ENCODE measurements at regions of chr1 and their contacts with region 1.

Region 1: DNA sequence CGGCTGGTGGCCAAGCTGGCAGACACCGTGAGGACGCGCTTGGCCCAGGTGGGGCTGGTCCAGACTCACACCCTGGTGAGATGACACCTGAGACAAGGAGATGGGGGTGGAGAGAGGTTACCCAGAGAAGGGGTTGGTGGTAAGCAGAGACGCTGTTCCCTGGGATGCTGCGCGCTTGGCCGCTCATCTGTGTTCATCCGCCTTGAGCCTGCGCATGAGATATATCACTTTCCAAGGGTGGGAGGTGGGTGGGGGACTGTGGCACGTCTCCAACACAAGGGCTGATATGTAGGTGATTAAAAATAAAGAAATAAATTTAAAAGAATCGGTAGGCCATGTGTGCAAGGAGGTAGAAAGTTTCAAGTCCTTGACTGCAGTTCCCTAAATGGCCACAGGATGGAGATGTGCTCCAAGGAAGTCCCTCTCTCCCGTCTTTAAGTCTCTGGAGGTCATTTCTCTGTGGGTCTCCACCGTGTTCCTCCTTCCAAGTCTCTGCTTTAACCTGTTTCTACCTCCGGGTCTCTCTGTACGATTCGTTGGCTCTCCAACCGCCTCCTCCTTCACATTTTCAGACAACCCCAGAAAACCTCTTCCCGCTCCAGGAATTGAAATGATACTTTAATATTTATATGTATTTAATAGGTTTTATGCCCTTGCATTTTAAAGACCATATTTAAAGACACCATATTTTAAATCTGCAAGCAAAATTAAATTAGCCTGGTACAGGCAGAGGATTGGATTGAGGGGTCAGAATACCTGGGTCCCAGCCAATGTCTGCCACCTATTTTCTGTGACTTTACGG is 4.5 kb downstream of the TTC24 start:
- DNase-seq: peak in 8 of 9 donors; percentile 49 to 76 (median 69)
- ATAC-seq: peak; percentile 81
- H3K4me3 ChIP-seq: no peak overlapping the region
- H3K4me3 Mint-ChIP-seq: peak overlapping the region in 8 of 10 donors; percentile 9 to 77 (median 54)
- H3K27ac ChIP-seq: peak overlapping the region; percentile 3
- H3K27ac Mint-ChIP-seq: peak overlapping the region in 8 of 9 donors; percentile 26 to 88 (median 72)
- H3K4me1 ChIP-seq: peaks cover 15 to 25% of the 10 kb centered on the region in 2 donors
- H3K4me1 Mint-ChIP-seq: peaks cover 6 to 40% (median 29%) of the 10 kb centered on the region in 7 donors
- H3K27me3 ChIP-seq: no peaks in the 10 kb centered on the region
- H3K27me3 Mint-ChIP-seq: no peaks in the 10 kb centered on the region

Region 2: GRCh38 chr1:156549385-156549784 is 34.6 kb before region 1 on chr1:
- CTCF ChIA-PET with region 1: no interaction called
- POLR2A ChIA-PET with region 1: no interaction called
- intact Hi-C with region 1: no loop called
- DNase-seq: no peak
- ATAC-seq: no peak
- H3K4me3 ChIP-seq: no peak overlapping the region
- H3K4me3 Mint-ChIP-seq: no peak overlapping the region
- H3K27ac ChIP-seq: no peak overlapping the region
- H3K27ac Mint-ChIP-seq: no peak overlapping the region
- H3K4me1 ChIP-seq: no peaks in the 10 kb centered on the region
- H3K4me1 Mint-ChIP-seq: peaks cover 0 to 5% (median 4%) of the 10 kb centered on the region in 7 donors
- H3K27me3 ChIP-seq: no peaks in the 10 kb centered on the region
- H3K27me3 Mint-ChIP-seq: no peaks in the 10 kb centered on the region

Region 3: DNA sequence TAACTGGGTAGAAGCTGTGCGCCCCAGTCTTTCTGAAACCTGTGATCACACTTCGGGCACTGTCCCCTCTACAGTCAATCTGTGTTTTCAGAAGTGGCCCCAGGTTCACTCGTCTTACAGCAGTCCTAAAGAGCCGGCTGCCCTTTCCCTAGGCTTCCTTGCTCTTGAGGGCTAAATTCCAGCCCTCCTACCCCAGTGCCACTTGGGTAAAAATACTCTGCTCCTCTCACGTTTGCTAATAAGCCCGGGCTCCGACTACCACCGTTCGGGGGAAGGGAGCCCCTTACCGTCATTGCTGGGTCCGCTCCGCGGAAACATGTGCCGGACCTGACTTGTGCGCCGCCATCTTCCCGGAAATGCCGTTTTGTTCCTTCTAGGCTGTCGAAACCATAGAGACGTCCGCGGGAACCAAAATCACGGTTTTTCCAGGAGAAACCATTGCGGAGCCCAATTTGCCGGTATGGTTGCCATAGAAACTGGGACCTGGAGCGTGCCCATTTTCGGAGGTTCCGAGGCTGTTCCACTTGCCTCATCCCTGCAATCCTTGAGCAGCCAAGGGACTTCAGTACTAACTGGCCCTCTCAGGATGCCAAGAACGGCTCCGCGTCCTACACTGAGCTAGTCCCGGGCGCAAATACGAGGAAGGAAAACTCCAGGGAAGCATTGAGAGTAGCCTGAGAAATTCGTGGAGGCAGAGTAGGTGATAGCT is 17.3 kb after region 1 on chr1 and contains the start of gene GPATCH4:
- CTCF ChIA-PET with region 1: interaction called, 8 read pairs
- POLR2A ChIA-PET with region 1: interaction called, 5 read pairs
- intact Hi-C with region 1: loop called in 1 of 2 experiments (anchors 2 kb)
- DNase-seq: peak; percentile 49 to 79 (median 74)
- ATAC-seq: peak; percentile 88
- H3K4me3 ChIP-seq: peak within 1 kb of the TSS; percentile 68
- H3K4me3 Mint-ChIP-seq: peak within 1 kb of the TSS; percentile 90 to 100 (median 93)
- H3K27ac ChIP-seq: peak within 1 kb of the TSS; percentile 86
- H3K27ac Mint-ChIP-seq: peak within 1 kb of the TSS; percentile 92 to 99 (median 94)
- H3K4me1 ChIP-seq: peaks cover 9 to 19% of the 10 kb centered on the region in 2 donors
- H3K4me1 Mint-ChIP-seq: peaks cover 24 to 41% (median 36%) of the 10 kb centered on the region in 7 donors
- H3K27me3 ChIP-seq: no peaks in the 10 kb centered on the region
- H3K27me3 Mint-ChIP-seq: no peaks in the 10 kb centered on the region
- total RNA-seq, gene GPATCH4: 33.3 to 49.6 (median 39.1) TPM

Measured in naive thymus-derived CD4-positive, alpha-beta T cell (primary cell).